Dendritic cell treated with granulocyte-macrophage colony-stimulating factor and Interleukin-4, amounts not matched to agents 40 ng/mL and 50 ng/mL, for 4 days (primary cell): ENCODE measurements at regions of chr19 and their contacts with region 1.

Region 1: DNA sequence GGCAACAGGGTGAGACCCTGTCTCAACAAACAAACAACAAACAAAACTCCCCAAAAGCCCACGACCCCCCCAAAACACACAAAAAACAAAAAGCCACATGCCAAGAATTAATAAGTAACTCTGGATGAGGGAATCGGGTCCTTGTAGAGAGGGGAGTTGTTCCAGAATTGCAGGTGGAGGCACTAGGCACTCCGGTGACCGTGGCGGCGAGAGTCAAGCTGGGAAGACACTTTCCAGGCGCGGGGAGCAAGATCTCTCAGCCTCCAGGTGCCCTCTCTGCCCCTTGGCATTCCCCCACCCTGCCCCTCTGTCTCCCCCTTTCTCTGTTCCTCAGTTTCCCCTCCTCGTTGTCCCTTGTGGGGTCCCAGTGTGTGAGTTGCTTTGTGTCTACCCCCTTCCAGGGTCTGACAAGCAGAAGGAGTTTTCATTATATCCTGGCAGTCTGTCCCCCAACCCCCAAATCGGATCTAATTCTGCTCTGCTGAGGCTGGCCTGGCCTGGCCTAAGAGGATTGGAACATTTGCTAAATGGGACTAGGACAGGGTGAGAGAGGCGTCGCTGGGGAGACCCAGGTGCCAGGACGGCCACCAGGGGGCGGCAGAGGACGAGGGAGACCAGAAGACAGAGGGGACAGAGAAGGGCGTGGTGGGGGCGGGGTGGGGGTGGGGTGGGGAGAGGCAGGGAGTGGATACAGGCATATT is 8.3 kb upstream of the CRX start:
- H3K4me3 Mint-ChIP-seq: no peak overlapping the region
- H3K27ac Mint-ChIP-seq: no peak overlapping the region
- H3K4me1 Mint-ChIP-seq: no peaks in the 10 kb centered on the region
- H3K27me3 Mint-ChIP-seq: peaks cover 7% of the 10 kb centered on the region

Region 2: GRCh38 chr19:47863514-47863936 is 50.1 kb after region 1 on chr19:
- intact Hi-C with region 1: loop called (anchors 5 kb)
- H3K4me3 Mint-ChIP-seq: no peak overlapping the region
- H3K27ac Mint-ChIP-seq: no peak overlapping the region
- H3K4me1 Mint-ChIP-seq: no peaks in the 10 kb centered on the region
- H3K27me3 Mint-ChIP-seq: peaks cover 29% of the 10 kb centered on the region